Gastrocnemius medialis (tissue), 4 donors: ENCODE measurements at regions of chr12 and their contacts with region 1.

Region 1: GRCh38 chr12:118526255-118527095 is 150.1 kb downstream of the SUDS3 start:
- DNase-seq: peak; percentile 58 to 89
- ATAC-seq: peak; percentile 90 to 93
- H3K4me3 ChIP-seq: no peak overlapping the region
- H3K27ac ChIP-seq: peak overlapping the region; percentile 64 to 87 (median 78)
- H3K4me1 ChIP-seq: peaks cover 8 to 12% of the 10 kb centered on the region in 2 donors
- H3K27me3 ChIP-seq: no peaks in the 10 kb centered on the region
- CTCF ChIP-seq: no peak
- POLR2A ChIP-seq: no peak

Region 2: GRCh38 chr12:118315821-118316220 is 210.7 kb before region 1 on chr12:
- in situ Hi-C with region 1: no loop called
- intact Hi-C with region 1: no loop called
- DNase-seq: no peak
- ATAC-seq: no peak
- H3K4me3 ChIP-seq: no peak overlapping the region
- H3K27ac ChIP-seq: no peak overlapping the region
- H3K4me1 ChIP-seq: peaks cover 8 to 13% of the 10 kb centered on the region in 2 donors
- H3K27me3 ChIP-seq: no peaks in the 10 kb centered on the region
- CTCF ChIP-seq: no peak
- POLR2A ChIP-seq: no peak

Region 3: GRCh38 chr12:118500299-118500698 is 26.2 kb before region 1 on chr12:
- in situ Hi-C with region 1: no loop called
- intact Hi-C with region 1: no loop called
- DNase-seq: no peak
- ATAC-seq: no peak
- H3K4me3 ChIP-seq: no peak overlapping the region
- H3K27ac ChIP-seq: no peak overlapping the region
- H3K4me1 ChIP-seq: peaks cover 0 to 3% of the 10 kb centered on the region in 2 donors
- H3K27me3 ChIP-seq: no peaks in the 10 kb centered on the region
- CTCF ChIP-seq: no peak
- POLR2A ChIP-seq: no peak

Region 4: GRCh38 chr12:118537481-118537917 is 11.0 kb after region 1 on chr12:
- in situ Hi-C with region 1: no loop called
- intact Hi-C with region 1: loop called (anchors 1 kb)
- DNase-seq: peak; percentile 71 to 87
- ATAC-seq: peak; percentile 96 to 98
- H3K4me3 ChIP-seq: peak overlapping the region in 1 of 4 donors; percentile 3
- H3K27ac ChIP-seq: peak overlapping the region; percentile 97 to 99 (median 98)
- H3K4me1 ChIP-seq: peaks cover 24% of the 10 kb centered on the region in 2 donors
- H3K27me3 ChIP-seq: no peaks in the 10 kb centered on the region
- CTCF ChIP-seq: no peak
- POLR2A ChIP-seq: peak; percentile 26 to 77